Left colon (tissue), 2 donors: ENCODE measurements at regions of chr17 and their contacts with region 1.

Region 1: DNA sequence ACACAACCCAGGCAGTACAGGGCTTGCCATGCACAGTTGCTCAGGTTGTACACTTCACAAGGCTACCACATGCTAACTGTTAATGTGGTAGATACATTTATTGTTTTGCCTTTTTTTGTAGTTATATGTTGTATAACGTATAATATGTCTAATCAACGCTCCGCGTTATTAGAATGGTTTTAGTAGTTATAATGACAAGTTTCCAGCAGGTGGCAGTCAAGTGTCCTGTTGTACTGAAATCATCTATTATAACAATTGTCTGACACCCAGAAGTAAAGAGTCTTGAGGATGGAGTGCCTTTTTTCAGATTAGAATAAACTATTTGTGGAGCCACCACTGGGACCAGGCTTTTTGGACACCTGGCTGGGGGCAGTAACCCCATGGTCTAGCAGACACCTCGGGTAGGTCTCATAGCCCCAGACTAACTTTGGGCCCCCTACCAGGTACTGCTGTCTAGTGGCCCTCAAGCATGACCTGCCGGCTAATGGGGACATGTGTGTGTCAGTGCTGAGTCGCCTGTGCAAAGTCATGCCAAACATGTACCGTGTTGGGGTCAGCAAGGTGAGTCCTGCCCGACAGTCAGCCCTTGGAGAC is 32.8 kb downstream of the MYO15A start:
- DNase-seq: no peak
- ATAC-seq: peak; percentile 67

Region 2: DNA sequence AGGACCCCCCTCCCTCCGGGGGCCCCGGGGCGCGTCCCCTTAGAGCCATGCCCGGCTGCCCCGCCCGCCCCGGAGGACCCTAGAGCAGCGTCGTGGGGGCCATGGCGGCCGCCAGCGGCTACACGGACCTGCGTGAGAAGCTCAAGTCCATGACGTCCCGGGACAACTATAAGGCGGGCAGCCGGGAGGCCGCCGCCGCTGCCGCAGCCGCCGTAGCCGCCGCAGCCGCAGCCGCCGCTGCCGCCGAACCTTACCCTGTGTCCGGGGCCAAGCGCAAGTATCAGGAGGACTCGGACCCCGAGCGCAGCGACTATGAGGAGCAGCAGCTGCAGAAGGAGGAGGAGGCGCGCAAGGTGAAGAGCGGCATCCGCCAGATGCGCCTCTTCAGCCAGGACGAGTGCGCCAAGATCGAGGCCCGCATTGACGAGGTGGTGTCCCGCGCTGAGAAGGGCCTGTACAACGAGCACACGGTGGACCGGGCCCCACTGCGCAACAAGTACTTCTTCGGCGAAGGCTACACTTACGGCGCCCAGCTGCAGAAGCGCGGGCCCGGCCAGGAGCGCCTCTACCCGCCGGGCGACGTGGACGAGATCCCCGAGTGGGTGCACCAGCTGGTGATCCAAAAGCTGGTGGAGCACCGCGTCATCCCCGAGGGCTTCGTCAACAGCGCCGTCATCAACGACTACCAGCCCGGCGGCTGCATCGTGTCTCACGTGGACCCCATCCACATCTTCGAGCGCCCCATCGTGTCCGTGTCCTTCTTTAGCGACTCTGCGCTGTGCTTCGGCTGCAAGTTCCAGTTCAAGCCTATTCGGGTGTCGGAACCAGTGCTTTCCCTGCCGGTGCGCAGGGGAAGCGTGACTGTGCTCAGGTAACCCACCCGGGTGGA is 43.1 kb after region 1 on chr17:
- intact Hi-C with region 1: loop called in 1 of 2 experiments (anchors 5 kb)
- DNase-seq: peak; percentile 64 to 66
- ATAC-seq: peak; percentile 6

Region 3: GRCh38 chr17:18217412-18218015 is 76.2 kb after region 1 on chr17:
- intact Hi-C with region 1: loop called in 1 of 2 experiments (anchors 5 kb)
- DNase-seq: peak; percentile 56 to 80
- ATAC-seq: peak; percentile 93